Naive thymus-derived CD4-positive, alpha-beta T cell (primary cell): ENCODE measurements at regions of chr6 and their contacts with region 1.

Region 1: DNA sequence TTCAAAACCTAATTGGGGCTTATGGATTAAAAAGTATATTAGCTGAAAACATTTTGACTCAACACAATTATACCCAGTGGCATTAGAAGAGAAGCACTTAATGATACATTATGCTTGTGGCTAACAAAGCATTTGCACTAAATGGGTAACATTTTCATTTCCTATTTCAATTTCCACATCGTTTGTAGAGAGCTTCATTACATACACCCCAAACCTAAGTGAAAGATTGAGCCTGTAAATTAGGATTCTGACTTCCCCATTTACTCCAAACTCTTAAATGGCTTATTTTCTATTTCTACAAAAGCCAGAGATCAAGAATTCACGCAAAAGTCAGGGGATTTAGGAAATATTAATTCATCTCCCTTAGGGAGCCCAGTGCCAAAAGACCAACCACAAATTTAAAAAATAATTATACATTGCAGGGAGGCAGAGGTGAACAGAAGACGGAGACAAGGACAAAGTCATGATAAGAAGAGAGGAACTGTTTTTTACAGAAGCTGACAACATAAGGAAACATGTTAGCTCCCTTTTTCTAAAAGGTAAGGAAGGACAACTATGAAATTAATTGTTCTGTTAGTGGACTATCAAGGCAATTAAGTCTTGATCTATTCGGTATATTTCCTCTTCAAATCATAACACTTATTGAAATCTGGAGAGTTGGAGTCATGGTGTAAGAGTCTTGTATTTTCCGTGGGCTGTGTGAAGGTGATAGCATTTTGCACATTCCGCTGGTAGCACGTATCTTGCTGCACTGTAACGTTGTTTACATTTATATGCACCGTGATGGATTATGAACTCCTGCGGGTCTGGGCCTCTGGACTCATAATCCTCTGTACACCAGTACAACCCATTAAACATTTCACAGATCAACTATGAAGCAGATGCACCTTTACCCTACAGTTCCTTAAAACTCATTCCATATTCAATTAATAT is 24.8 kb upstream of the EZR start:
- DNase-seq: no peak
- ATAC-seq: peak; percentile 45
- H3K4me3 ChIP-seq: no peak overlapping the region
- H3K4me3 Mint-ChIP-seq: no peak overlapping the region
- H3K27ac ChIP-seq: no peak overlapping the region
- H3K27ac Mint-ChIP-seq: peak overlapping the region in 1 of 9 donors; percentile 63
- H3K4me1 ChIP-seq: no peaks in the 10 kb centered on the region
- H3K4me1 Mint-ChIP-seq: peaks cover 0 to 9% (median 1%) of the 10 kb centered on the region in 7 donors
- H3K27me3 ChIP-seq: no peaks in the 10 kb centered on the region
- H3K27me3 Mint-ChIP-seq: peaks cover 0 to 24% (median 0%) of the 10 kb centered on the region in 5 donors

Region 2: DNA sequence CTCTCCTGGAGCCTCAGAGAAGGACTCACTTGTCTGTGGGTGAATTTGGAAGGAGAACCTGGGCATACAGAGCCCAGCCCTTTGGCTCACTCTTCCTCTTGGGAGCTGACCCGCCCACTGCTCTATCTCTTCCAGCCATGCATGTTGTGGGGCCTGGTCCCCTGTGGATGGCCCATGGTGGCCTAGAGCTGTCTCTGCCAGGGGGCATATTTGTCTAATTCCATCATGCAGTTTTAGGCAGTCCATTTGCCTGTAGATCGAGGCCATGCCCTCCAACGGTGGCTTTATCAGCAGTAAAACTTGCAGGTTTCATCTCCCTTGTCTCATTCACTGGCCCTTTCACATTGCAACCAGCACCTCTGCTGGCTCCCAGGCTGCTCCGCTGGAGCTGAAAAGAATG is 12.0 kb before region 1 on chr6:
- CTCF ChIA-PET with region 1: no interaction called
- POLR2A ChIA-PET with region 1: interaction called, 13 read pairs
- intact Hi-C with region 1: no loop called
- DNase-seq: no peak
- ATAC-seq: no peak
- H3K4me3 ChIP-seq: no peak overlapping the region
- H3K4me3 Mint-ChIP-seq: no peak overlapping the region
- H3K27ac ChIP-seq: no peak overlapping the region
- H3K27ac Mint-ChIP-seq: peak overlapping the region in 2 of 9 donors; percentile 18 to 32
- H3K4me1 ChIP-seq: no peaks in the 10 kb centered on the region
- H3K4me1 Mint-ChIP-seq: peaks cover 0 to 3% (median 0%) of the 10 kb centered on the region in 7 donors
- H3K27me3 ChIP-seq: no peaks in the 10 kb centered on the region
- H3K27me3 Mint-ChIP-seq: peaks cover 0 to 20% (median 0%) of the 10 kb centered on the region in 5 donors

Region 3: DNA sequence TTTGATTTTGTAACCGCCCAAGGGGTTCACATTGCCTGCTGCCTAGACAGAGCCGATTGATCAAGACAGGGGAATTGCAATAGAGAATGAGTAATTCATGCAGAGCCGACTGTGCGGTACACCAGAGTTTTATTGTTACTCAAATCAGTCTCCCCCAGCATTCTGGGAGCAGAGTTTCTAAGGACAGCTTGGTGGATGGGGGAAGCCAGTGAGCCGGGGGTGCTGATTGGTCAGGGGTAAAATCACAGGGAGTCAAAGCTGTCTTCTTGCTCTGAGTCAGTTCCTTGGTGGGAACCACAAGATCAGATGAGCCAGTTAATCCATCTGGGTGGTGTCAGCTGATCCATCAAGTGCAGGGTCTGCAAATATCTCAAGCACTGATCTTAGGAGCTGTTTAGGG is 35.2 kb after region 1 on chr6:
- CTCF ChIA-PET with region 1: no interaction called
- POLR2A ChIA-PET with region 1: no interaction called
- intact Hi-C with region 1: no loop called
- DNase-seq: peak in 1 of 9 donors; percentile 44
- ATAC-seq: no peak
- H3K4me3 ChIP-seq: no peak overlapping the region
- H3K4me3 Mint-ChIP-seq: no peak overlapping the region
- H3K27ac ChIP-seq: no peak overlapping the region
- H3K27ac Mint-ChIP-seq: no peak overlapping the region
- H3K4me1 ChIP-seq: no peaks in the 10 kb centered on the region
- H3K4me1 Mint-ChIP-seq: peaks cover 0 to 4% (median 0%) of the 10 kb centered on the region in 7 donors
- H3K27me3 ChIP-seq: no peaks in the 10 kb centered on the region
- H3K27me3 Mint-ChIP-seq: peaks cover 0 to 5% (median 0%) of the 10 kb centered on the region in 5 donors